AG04450 (cell line): ENCODE measurements at regions of chr6 and their contacts with region 1.

Region 1: DNA sequence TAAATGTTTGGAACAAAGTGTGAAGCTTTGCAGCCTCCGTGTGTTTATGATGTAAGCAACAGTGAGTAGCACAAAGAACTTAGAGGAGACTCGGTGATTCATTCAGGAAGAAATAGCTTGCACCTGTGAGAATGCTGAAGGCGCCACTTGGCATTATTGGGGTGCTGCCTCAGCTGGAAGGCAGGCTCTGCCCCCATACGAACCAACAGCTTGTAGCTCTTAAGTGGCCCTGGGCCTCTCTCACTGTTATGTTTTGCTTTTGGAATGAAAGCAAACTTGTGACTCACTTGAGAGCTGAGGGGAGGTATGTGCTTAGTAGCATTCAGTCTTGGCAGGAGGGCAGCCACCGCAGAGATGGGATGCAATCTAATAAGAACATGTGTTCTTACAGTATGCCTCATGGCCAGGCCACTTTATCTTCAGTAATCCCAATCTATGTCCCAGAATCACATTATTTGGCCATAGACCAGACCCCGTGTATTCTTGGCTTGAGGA is 310.7 kb downstream of the EYA4 start:
- DNase-seq: peak; percentile 99
- H3K4me3 ChIP-seq: no peak overlapping the region
- H3K27ac ChIP-seq: peak overlapping the region; percentile 94
- H3K27me3 ChIP-seq: no peaks in the 10 kb centered on the region
- CTCF ChIP-seq: no peak

Region 2: GRCh38 chr6:132962936-132963868 is 588.7 kb before region 1 on chr6:
- CTCF ChIA-PET with region 1: interaction called, 14 read pairs
- POLR2A ChIA-PET with region 1: no interaction called
- DNase-seq: no peak
- H3K4me3 ChIP-seq: no peak overlapping the region
- H3K27ac ChIP-seq: no peak overlapping the region
- H3K27me3 ChIP-seq: no peaks in the 10 kb centered on the region
- CTCF ChIP-seq: peak; percentile 89

Region 3: DNA sequence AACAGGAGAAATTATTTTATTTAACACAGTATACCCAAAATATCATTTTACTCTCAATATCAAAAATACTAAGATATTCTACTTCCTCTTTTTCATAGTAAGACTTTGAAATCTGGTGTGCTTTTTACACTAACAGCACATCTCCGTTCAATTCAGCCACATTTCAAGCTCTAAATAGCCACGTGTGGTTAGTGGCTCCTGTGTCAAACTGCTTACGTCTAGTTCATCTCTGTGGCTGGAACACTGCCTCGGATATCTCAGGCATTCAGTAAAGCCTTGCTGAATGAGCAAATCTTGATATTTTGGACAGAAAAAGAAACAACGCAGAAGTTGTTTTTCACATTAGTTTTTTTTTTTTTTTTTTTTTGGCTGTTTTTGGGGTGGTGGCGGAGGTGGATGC is 174.7 kb before region 1 on chr6:
- CTCF ChIA-PET with region 1: no interaction called
- POLR2A ChIA-PET with region 1: no interaction called
- DNase-seq: no peak
- H3K4me3 ChIP-seq: no peak overlapping the region
- H3K27ac ChIP-seq: no peak overlapping the region
- H3K27me3 ChIP-seq: no peaks in the 10 kb centered on the region
- CTCF ChIP-seq: no peak

Region 4: GRCh38 chr6:133587546-133588160 is 35.8 kb after region 1 on chr6:
- CTCF ChIA-PET with region 1: no interaction called
- POLR2A ChIA-PET with region 1: interaction called, 16 read pairs
- DNase-seq: peak; percentile 70
- H3K4me3 ChIP-seq: no peak overlapping the region
- H3K27ac ChIP-seq: no peak overlapping the region
- H3K27me3 ChIP-seq: no peaks in the 10 kb centered on the region
- CTCF ChIP-seq: no peak

Region 5: DNA sequence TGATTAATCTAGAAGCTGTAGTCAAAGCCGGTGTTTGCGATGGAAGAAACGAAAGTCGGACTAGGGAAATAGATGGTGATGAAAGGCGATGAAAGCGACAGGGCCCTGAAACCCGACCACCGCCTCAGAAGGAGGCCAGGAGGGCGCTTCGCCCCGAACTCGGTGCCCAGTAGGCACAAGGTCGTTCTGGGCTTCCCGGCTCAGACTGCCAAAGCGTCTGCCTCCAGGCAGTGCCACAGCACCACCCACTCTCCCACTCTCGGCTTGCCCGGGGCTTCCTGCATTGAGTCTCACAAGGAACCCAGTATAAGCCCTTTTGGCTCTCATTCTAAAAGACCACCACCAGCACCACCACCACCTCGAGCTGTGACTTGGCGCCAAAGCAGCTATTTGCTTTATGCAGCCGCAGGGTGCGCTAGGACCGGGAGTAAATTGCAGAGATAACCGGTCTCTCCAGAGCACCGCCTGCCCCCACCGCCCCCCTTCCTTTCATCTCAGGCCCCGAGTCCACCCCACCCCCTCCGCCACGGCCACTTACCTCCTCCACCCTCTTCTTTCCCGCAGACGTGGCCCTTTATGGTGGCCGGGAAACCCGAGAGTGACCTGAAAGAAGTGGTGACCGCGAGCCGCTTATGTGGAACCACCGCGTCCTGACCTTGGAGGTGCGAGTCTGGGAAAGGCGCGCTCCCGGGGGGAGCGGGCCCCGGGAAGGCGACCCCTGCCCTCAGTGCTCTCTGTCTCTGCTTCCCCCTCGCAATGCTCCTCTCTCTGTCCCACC is 339.4 kb after region 1 on chr6:
- CTCF ChIA-PET with region 1: no interaction called
- POLR2A ChIA-PET with region 1: interaction called, 11 read pairs
- DNase-seq: no peak
- H3K4me3 ChIP-seq: peak overlapping the region; percentile 98
- H3K27ac ChIP-seq: peak overlapping the region; percentile 75
- H3K27me3 ChIP-seq: no peaks in the 10 kb centered on the region
- CTCF ChIP-seq: 0 out of 2 replicates have a peak, but pooled peaks have one; percentile 9

Region 6: DNA sequence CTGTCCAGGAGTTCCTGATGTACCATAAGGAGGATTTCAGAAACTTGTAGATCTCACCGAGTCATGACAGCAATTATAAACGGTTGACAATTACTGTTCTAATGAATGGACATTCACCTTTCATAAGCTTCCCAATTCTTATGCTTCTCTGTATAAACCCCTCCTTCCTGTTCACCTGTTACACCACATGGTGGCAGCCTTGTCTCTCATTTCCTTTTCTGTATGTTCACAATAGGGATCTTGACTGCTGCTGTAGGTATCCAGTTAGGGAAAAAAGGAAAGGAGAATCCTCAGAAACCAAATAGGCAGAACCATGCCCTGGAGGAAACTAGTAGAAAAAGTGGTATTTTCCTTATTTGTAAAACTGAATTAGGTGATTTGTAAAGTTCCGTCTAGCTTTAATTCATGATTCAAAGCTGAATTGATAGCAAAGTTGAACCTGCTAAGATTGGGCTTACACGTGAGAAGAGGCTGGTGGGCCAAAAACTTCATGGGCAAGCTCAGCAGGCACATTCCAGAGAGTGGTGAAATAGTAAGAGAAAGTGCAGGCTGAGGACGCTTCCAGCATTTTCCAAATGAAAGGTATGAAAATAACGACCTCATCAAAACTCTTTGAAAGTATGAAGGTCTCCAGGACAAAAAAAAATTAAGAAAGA is 372.2 kb after region 1 on chr6:
- CTCF ChIA-PET with region 1: interaction called, 15 read pairs
- POLR2A ChIA-PET with region 1: interaction called, 4 read pairs
- DNase-seq: peak; percentile 59
- H3K4me3 ChIP-seq: no peak overlapping the region
- H3K27ac ChIP-seq: no peak overlapping the region
- H3K27me3 ChIP-seq: no peaks in the 10 kb centered on the region
- CTCF ChIP-seq: peak; percentile 88